MCF 10A (cell line): ENCODE measurements at regions of chr11 and their contacts with region 1.

Region 1: DNA sequence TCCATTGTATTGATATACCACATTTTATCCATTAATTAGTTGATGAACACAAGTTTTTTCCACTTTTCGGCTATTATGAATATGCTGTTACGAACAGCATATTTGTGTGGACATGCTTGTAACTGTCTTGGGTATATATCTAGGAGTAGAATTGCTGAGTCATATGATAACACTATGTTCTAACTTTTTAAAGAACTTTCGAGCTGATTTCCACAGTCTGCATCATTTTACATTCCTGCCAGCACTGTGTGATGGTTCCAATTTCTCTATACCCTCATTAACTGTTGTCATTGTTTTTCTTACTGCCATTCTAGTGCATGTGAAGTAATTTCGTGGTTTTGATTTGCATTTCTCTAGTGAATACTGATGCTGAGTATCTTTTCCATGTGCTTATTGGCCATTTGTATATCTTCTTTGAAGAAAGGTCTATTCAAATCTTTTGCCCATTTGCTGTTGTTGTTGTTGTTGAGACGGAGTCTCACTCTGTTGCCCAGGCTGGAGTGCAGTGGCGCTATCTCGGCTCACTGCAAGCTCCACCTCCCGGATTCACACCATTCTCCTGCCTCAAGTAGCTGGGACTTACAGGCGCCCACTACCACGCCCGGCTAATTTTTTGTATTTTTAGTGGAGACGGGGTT is 7.4 kb upstream of the RCE1 start:
- DNase-seq: no peak
- H3K4me3 Mint-ChIP-seq: no peak overlapping the region
- H3K27ac Mint-ChIP-seq: peak overlapping the region; percentile 23
- H3K4me1 Mint-ChIP-seq: peaks cover 24% of the 10 kb centered on the region
- H3K27me3 Mint-ChIP-seq: no peaks in the 10 kb centered on the region
- CTCF ChIP-seq: no peak

Region 2: GRCh38 chr11:66408488-66409214 is 427.2 kb before region 1 on chr11:
- CTCF ChIA-PET with region 1: no interaction called
- POLR2A ChIA-PET with region 1: no interaction called
- intact Hi-C with region 1: loop called (anchors 1 kb)
- DNase-seq: peak; percentile 83
- H3K4me3 Mint-ChIP-seq: peak overlapping the region; percentile 56
- H3K27ac Mint-ChIP-seq: no peak overlapping the region
- H3K4me1 Mint-ChIP-seq: no peaks in the 10 kb centered on the region
- H3K27me3 Mint-ChIP-seq: peaks cover 64% of the 10 kb centered on the region
- CTCF ChIP-seq: peak; percentile 100

Region 3: GRCh38 chr11:66694732-66695207 is 141.1 kb before region 1 on chr11:
- CTCF ChIA-PET with region 1: interaction called, 78 read pairs
- POLR2A ChIA-PET with region 1: interaction called, 6 read pairs
- intact Hi-C with region 1: loop called (anchors 1 kb)
- DNase-seq: peak; percentile 96
- H3K4me3 Mint-ChIP-seq: no peak overlapping the region
- H3K27ac Mint-ChIP-seq: peak overlapping the region; percentile 69
- H3K4me1 Mint-ChIP-seq: no peaks in the 10 kb centered on the region
- H3K27me3 Mint-ChIP-seq: no peaks in the 10 kb centered on the region
- CTCF ChIP-seq: peak; percentile 94

Region 4: DNA sequence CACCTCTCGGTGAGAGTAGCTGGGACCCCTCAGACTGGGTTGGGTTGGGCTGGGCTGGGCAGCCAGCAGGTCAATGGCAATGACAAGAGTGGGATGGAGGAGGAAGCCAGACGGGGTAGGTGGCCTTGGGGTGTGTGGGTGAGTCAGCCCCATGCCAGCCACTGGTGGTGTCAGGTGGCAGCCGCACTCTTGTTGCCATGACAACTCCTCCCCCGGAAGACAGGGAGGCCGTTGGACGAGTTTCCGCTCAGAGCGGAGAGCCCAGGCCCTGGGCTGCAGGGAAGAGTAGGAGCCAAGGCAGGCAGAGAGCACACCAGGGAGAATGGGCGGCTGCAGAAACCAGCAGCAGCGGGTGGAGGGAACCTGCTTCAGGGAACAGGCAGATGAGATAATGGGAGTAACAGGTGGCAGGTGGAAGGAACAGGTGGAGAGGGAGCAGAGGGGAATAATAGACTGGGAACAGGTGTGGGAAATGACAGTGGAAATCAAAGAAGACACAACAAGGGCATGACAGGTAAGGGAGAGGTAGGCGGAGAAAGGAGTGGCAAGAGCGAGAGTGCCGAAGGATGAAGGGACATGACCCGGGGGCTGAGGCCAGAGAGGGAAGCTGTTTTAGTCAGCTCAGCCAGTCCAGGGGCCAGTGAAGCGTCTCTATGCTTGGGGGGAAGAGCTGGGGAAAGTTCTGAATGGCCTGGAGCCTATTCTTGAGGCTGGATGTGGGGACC is 115.5 kb before region 1 on chr11:
- CTCF ChIA-PET with region 1: interaction called, 8 read pairs
- POLR2A ChIA-PET with region 1: no interaction called
- intact Hi-C with region 1: loop called (anchors 10 kb)
- DNase-seq: peak; percentile 93
- H3K4me3 Mint-ChIP-seq: peak overlapping the region; percentile 60
- H3K27ac Mint-ChIP-seq: peak overlapping the region; percentile 71
- H3K4me1 Mint-ChIP-seq: peaks cover 9% of the 10 kb centered on the region
- H3K27me3 Mint-ChIP-seq: no peaks in the 10 kb centered on the region
- CTCF ChIP-seq: no peak

Region 5: GRCh38 chr11:66883016-66883968 is 47.4 kb after region 1 on chr11:
- CTCF ChIA-PET with region 1: no interaction called
- POLR2A ChIA-PET with region 1: no interaction called
- intact Hi-C with region 1: no loop called
- DNase-seq: peak; percentile 56
- H3K4me3 Mint-ChIP-seq: no peak overlapping the region
- H3K27ac Mint-ChIP-seq: no peak overlapping the region
- H3K4me1 Mint-ChIP-seq: peaks cover 54% of the 10 kb centered on the region
- H3K27me3 Mint-ChIP-seq: no peaks in the 10 kb centered on the region
- CTCF ChIP-seq: peak; percentile 7

Region 6: GRCh38 chr11:67332081-67332691 is 496.3 kb after region 1 on chr11:
- CTCF ChIA-PET with region 1: no interaction called
- POLR2A ChIA-PET with region 1: no interaction called
- intact Hi-C with region 1: no loop called
- DNase-seq: no peak
- H3K4me3 Mint-ChIP-seq: no peak overlapping the region
- H3K27ac Mint-ChIP-seq: no peak overlapping the region
- H3K4me1 Mint-ChIP-seq: peaks cover 3% of the 10 kb centered on the region
- H3K27me3 Mint-ChIP-seq: no peaks in the 10 kb centered on the region
- CTCF ChIP-seq: no peak

Region 7: GRCh38 chr11:67492801-67493547 is 657.1 kb after region 1 on chr11:
- CTCF ChIA-PET with region 1: no interaction called
- POLR2A ChIA-PET with region 1: no interaction called
- intact Hi-C with region 1: no loop called
- DNase-seq: no peak
- H3K4me3 Mint-ChIP-seq: no peak overlapping the region
- H3K27ac Mint-ChIP-seq: no peak overlapping the region
- H3K4me1 Mint-ChIP-seq: no peaks in the 10 kb centered on the region
- H3K27me3 Mint-ChIP-seq: no peaks in the 10 kb centered on the region
- CTCF ChIP-seq: no peak